ENCODE measurements at regions of chr2 and their contacts with region 1.

Region 1: GRCh38 chr2:201231781-201232466 is 28.4 kb upstream of the CASP8 start:
- DNase-seq: peak; percentile 69
- ATAC-seq: peak; percentile 62
- H3K4me3 Mint-ChIP-seq: peak overlapping the region; percentile 55
- H3K27ac Mint-ChIP-seq: peak overlapping the region; percentile 93
- H3K4me1 Mint-ChIP-seq: peaks cover 56% of the 10 kb centered on the region
- H3K27me3 Mint-ChIP-seq: no peaks in the 10 kb centered on the region
- CTCF ChIP-seq: peak; percentile 32

Region 2: GRCh38 chr2:200585730-200586643 is 645.9 kb before region 1 on chr2 and contains the start of gene AOX1:
- CTCF ChIA-PET with region 1: no interaction called
- POLR2A ChIA-PET with region 1: no interaction called
- intact Hi-C with region 1: no loop called
- DNase-seq: peak; percentile 22
- ATAC-seq: peak; percentile 37
- H3K4me3 Mint-ChIP-seq: peak within 1 kb of the TSS; percentile 83
- H3K27ac Mint-ChIP-seq: no peak within 1 kb of the TSS
- H3K4me1 Mint-ChIP-seq: peaks cover 14% of the 10 kb centered on the region
- H3K27me3 Mint-ChIP-seq: peaks cover 23% of the 10 kb centered on the region
- CTCF ChIP-seq: no peak
- total RNA-seq, gene AOX1: 0.24 TPM in 1 of 2 replicates, not detected in the other

Region 3: GRCh38 chr2:200888704-200889625 is 343.0 kb before region 1 on chr2 and contains the starts of genes NIF3L1 and PPIL3:
- CTCF ChIA-PET with region 1: interaction called, 8 read pairs
- POLR2A ChIA-PET with region 1: interaction called, 17 read pairs
- intact Hi-C with region 1: loop called (anchors 1 kb)
- DNase-seq: peak; percentile 90
- ATAC-seq: peak; percentile 80
- H3K4me3 Mint-ChIP-seq: peak within 1 kb of the TSS; percentile 99
- H3K27ac Mint-ChIP-seq: peak within 1 kb of the TSS; percentile 100
- H3K4me1 Mint-ChIP-seq: peaks cover 40% of the 10 kb centered on the region
- H3K27me3 Mint-ChIP-seq: no peaks in the 10 kb centered on the region
- CTCF ChIP-seq: no peak
- total RNA-seq, gene NIF3L1: 32.2 and 32.3 TPM in 2 replicates
- total RNA-seq, gene PPIL3: 43.5 and 52.5 TPM in 2 replicates

Region 4: DNA sequence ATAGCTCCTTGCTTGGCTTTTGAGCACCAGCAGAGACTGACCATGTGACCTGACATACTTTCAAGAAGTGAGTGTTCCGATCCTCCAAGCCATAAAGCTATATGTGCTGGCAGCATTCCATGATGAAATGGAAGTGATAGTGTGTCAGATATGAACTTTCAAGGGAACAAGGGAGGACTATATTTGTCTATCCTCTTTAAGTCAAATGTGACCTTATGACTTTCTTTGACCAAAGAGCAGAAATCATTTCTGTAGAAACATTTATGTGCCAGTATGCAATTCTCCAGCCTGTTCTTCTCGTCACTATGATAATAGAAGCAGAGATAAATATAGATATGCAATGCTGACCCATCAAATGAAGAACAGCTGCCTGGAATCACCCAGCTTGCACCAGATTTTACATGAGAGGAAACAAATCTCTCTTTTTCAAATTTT is 174.8 kb before region 1 on chr2:
- CTCF ChIA-PET with region 1: no interaction called
- POLR2A ChIA-PET with region 1: no interaction called
- intact Hi-C with region 1: no loop called
- DNase-seq: no peak
- ATAC-seq: no peak
- H3K4me3 Mint-ChIP-seq: no peak overlapping the region
- H3K27ac Mint-ChIP-seq: no peak overlapping the region
- H3K4me1 Mint-ChIP-seq: peaks cover 10% of the 10 kb centered on the region
- H3K27me3 Mint-ChIP-seq: no peaks in the 10 kb centered on the region
- CTCF ChIP-seq: no peak

Region 5: DNA sequence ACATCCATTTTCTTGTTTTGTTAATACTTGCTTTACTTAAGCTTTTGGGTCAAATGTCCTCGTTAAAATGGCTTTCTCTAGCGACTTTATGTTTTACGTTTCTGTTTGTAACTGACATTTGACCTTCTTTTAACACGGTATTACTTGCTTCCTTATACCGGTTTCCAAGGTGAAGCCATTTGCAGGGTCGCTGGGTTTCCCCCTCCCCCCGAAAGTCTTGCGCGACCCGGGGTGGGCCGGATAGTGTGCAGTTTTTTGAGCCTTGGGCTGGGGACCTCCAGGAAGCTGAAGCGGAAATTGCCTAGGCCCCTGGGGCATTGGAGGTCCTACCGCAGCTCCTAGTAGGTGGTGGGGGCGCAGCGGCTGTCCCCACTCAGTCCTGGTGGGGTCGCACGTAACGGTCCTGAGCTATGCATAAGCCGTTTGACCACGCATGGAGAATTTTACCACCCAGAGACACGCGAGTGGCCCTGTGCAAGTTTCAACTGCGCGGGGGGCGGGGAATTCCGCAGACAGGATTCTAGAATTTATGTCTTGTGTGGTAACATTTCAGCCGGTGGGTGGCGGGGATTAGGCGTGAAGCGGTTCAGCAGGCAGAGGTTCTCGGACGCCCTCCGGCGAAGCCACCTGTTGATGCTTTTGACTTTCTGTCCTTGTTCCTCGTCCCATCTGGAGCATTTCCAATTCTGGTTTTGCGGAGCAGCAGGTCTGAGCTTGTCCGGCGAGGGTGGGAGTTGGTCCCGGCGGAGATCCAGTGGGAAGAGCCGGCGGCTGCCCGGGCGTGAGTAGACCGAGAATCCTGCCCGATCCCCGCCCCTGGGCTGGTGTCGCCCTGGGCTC is 113.6 kb before region 1 on chr2:
- CTCF ChIA-PET with region 1: interaction called, 17 read pairs
- POLR2A ChIA-PET with region 1: interaction called, 49 read pairs
- intact Hi-C with region 1: loop called (anchors 1 kb)
- DNase-seq: peak; percentile 78
- ATAC-seq: peak; percentile 70
- H3K4me3 Mint-ChIP-seq: peak overlapping the region; percentile 100
- H3K27ac Mint-ChIP-seq: peak overlapping the region; percentile 99
- H3K4me1 Mint-ChIP-seq: peaks cover 77% of the 10 kb centered on the region
- H3K27me3 Mint-ChIP-seq: no peaks in the 10 kb centered on the region
- CTCF ChIP-seq: no peak

Region 6: DNA sequence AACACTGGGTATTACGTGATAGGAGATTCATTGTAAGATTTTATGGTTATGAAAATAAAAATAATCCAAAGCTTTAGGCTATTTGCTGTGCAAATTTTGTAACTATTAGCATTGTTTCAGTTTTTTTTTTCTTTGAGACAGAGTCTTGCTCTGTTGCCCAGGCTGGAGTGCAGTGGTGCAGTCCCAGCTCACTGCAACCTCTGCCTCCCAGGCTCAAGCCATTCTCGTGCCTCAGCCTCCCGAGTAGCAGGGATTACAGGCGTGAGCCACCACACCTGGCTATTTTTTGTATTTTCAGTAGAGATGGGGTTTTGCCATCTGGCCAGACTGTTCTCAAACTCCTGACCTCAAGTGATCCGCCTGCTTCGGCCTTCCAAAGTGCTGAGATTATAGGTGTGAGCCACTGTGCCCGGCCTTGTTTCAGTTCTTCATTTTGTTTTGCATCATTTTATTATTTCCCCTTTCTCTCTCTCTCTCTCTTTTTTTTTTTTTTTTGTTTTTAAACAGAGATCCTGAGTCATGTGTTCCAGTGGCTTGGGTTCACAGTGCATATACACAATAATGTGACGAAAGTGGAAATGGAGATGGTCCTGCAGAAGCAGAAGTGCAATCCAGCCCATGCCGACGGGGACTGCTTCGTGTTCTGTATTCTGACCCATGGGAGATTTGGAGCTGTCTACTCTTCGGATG is 23.2 kb before region 1 on chr2:
- CTCF ChIA-PET with region 1: interaction called, 13 read pairs
- POLR2A ChIA-PET with region 1: interaction called, 15 read pairs
- intact Hi-C with region 1: loop called (anchors 1 kb)
- DNase-seq: peak; percentile 40
- ATAC-seq: peak; percentile 83
- H3K4me3 Mint-ChIP-seq: peak overlapping the region; percentile 53
- H3K27ac Mint-ChIP-seq: peak overlapping the region; percentile 89
- H3K4me1 Mint-ChIP-seq: peaks cover 43% of the 10 kb centered on the region
- H3K27me3 Mint-ChIP-seq: no peaks in the 10 kb centered on the region
- CTCF ChIP-seq: no peak

Region 7: DNA sequence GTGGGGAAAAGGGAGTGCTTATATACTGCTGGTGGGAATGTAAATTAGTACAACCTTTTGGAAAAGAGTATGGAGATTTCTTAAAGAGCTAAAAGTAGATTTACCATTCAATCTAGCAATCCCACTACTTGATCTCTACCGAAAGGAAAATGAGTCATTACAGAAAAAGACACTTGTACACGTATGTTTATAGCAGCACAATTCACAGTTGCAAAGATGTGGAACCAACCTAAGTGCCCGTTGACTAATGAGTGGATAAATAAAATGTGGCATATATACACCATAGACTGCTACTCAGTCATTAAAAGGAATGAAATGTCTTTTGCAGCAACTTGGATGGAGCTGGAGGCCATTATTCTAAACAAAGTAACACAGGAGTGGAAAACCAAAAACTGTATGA is 95.8 kb after region 1 on chr2:
- CTCF ChIA-PET with region 1: no interaction called
- POLR2A ChIA-PET with region 1: no interaction called
- intact Hi-C with region 1: no loop called
- DNase-seq: no peak
- ATAC-seq: no peak
- H3K4me3 Mint-ChIP-seq: no peak overlapping the region
- H3K27ac Mint-ChIP-seq: no peak overlapping the region
- H3K4me1 Mint-ChIP-seq: no peaks in the 10 kb centered on the region
- H3K27me3 Mint-ChIP-seq: no peaks in the 10 kb centered on the region
- CTCF ChIP-seq: no peak

Region 8: DNA sequence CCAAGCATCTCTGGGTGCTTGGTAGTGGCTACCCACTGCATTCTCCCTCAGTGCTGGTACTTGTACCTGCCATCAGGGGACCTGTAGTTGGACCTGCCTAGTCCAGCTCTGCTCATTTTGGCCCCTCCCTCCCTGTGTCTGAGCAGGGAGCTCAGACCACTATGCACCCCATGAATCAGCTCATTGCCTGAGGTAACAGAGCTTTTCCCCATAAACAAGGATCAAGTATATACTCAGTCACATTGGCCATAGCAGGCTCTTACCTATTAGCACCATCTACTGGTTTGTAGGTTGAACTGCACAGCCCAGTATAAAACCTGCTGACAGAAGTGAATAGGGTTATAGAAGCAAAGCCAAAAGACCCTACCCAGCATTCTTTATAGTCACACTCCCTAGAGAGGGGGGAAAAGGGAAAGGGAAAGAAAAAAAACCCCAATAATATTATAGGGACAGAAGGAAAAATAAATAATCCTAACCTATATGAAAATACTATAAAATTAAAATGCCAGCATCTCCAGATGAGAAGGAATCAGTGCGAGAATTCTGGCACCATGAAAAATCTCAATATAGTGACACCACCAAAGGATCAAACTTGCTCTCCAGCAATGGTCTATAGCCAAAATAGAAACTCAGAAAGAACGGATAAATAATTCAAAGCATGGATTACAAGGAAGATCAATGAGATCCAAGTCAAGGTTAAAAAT is 132.1 kb after region 1 on chr2:
- CTCF ChIA-PET with region 1: interaction called, 46 read pairs
- POLR2A ChIA-PET with region 1: interaction called, 6 read pairs
- intact Hi-C with region 1: loop called (anchors 1 kb)
- DNase-seq: no peak
- ATAC-seq: peak; percentile 97
- H3K4me3 Mint-ChIP-seq: no peak overlapping the region
- H3K27ac Mint-ChIP-seq: peak overlapping the region; percentile 56
- H3K4me1 Mint-ChIP-seq: peaks cover 5% of the 10 kb centered on the region
- H3K27me3 Mint-ChIP-seq: no peaks in the 10 kb centered on the region
- CTCF ChIP-seq: peak; percentile 93

Region 9: DNA sequence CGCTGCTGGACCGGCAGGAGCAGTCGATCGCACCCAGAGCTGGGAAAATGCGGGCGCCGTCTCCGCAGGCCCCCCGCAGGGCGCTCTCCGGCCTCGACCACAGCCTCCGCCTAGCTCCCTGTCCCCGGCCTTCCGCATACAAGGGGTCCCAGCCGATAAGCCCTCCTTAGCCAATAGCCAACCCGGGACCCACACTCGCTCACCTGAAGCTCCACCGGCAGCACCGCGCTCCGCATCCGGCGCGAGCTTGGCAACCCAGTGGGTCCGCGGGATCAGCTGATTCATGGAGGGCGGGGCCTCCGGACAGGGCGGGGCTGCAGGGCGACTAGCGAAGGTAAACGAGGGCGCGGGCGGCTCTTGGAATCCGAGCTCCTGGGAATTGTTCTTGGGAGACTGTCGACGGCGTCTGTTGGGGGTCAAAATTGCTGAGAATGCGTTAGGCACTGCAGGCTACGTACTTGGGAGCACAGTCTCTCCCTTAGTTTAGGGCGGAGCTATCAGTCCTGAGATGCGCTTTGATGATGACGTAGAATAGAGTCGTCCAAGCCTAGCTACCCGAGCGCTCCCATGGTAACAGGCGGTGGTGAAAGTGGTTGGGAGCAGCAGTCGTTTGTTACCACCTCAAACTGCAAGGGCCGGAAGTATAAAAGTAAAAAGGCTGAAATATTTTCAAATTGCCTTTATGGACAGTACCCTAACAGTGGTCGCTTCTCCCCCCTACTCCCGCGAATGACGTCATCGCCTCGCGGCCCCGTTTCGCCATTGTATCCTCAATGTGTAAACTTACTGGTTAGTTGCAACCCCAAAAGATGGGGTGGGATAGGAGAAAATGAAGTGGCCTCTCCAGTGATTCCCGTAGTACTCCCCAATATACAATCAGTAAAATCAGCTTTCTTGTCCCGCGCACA is 549.0 kb after region 1 on chr2 and contains the start of gene ALS2:
- CTCF ChIA-PET with region 1: interaction called, 3 read pairs
- POLR2A ChIA-PET with region 1: interaction called, 4 read pairs
- intact Hi-C with region 1: loop called (anchors 1 kb)
- DNase-seq: peak; percentile 95
- ATAC-seq: peak; percentile 90
- H3K4me3 Mint-ChIP-seq: peak within 1 kb of the TSS; percentile 96
- H3K27ac Mint-ChIP-seq: peak within 1 kb of the TSS; percentile 95
- H3K4me1 Mint-ChIP-seq: peaks cover 17% of the 10 kb centered on the region
- H3K27me3 Mint-ChIP-seq: peaks cover 8% of the 10 kb centered on the region
- CTCF ChIP-seq: no peak
- total RNA-seq, gene ALS2: 11.6 and 14.2 TPM in 2 replicates

Region 10: DNA sequence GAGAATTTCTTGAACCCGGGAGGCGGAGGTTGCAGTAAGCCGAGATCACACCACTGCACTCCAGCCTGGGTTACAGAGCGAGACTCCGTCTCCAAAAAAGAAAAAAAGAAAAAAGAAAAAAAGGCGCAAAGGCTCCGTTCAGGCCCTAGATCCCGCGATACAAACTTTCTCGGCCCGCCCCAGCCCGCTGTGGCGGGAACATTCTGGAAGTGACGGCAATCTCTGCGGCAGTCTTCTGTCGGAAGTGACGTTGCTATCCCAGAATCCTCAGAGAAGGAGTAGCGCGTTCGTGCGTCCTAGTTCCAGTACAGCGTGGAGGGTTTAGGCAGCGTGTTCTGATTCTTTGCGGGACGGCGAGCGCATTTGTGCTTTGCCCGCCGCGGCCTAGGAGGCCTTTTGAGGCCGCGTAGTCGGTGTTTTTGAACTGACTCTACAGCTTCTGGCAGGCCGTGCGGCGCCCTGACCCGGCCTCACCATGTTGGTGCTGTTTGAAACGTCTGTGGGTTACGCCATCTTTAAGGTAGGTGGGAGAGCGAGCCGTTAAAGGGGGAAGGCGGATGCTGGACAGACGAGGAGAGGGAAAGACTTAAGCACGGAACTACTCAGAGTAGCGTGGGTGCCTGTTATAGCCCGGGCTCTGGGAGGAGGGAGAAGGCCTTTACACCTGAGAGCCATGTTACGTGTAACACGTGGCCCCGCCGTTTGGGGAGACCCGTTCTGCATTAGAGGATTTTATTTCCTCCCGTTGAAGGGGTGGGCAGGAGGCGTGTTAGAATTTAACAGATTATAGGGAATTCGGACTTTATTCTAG is 1033.7 kb after region 1 on chr2 and contains the start of gene NOP58:
- CTCF ChIA-PET with region 1: no interaction called
- POLR2A ChIA-PET with region 1: interaction called, 3 read pairs
- intact Hi-C with region 1: loop called (anchors 10 kb)
- DNase-seq: peak; percentile 78
- ATAC-seq: peak; percentile 87
- H3K4me3 Mint-ChIP-seq: peak within 1 kb of the TSS; percentile 38
- H3K27ac Mint-ChIP-seq: no peak within 1 kb of the TSS
- H3K4me1 Mint-ChIP-seq: peaks cover 30% of the 10 kb centered on the region
- H3K27me3 Mint-ChIP-seq: no peaks in the 10 kb centered on the region
- CTCF ChIP-seq: no peak
- total RNA-seq, gene NOP58: 141 and 153 TPM in 2 replicates

Region 11: GRCh38 chr2:203177361-203177760 is 1945.4 kb after region 1 on chr2:
- CTCF ChIA-PET with region 1: no interaction called
- POLR2A ChIA-PET with region 1: no interaction called
- intact Hi-C with region 1: no loop called
- DNase-seq: no peak
- ATAC-seq: no peak
- H3K4me3 Mint-ChIP-seq: no peak overlapping the region
- H3K27ac Mint-ChIP-seq: no peak overlapping the region
- H3K4me1 Mint-ChIP-seq: no peaks in the 10 kb centered on the region
- H3K27me3 Mint-ChIP-seq: no peaks in the 10 kb centered on the region
- CTCF ChIP-seq: no peak